Heart right ventricle (tissue), 16 donors: ENCODE measurements at regions of chr17 and their contacts with region 1.

Region 1: DNA sequence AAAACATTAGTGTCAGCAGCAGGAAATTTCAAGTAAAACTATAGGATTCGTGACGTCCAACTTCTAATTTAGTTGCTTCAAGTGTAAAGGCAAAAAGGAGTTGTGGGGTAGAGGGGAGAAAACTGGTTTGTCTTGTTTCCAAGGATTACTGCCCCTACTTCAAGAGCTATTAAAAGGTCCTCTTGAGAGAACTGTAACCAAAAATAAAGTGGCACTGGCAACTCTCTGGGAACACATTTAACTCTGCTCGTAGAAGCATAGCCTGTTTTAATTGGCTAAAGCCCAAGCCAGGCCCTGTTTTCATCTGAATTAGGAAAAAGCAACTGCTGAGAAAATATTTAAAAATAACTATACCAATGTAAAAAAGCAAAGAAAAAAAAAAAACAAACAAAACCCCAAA is 51.8 kb upstream of the AKAP1 start:
- DNase-seq: peak in 1 of 2 donors; percentile 61
- ATAC-seq: peak; percentile 72 to 92 (median 84)
- H3K4me3 ChIP-seq: no peak overlapping the region
- H3K27ac ChIP-seq: peak overlapping the region; percentile 64 to 89 (median 78)
- H3K4me1 ChIP-seq: peaks cover 0 to 44% (median 12%) of the 10 kb centered on the region in 9 donors
- H3K27me3 ChIP-seq: peaks cover 0 to 13% (median 0%) of the 10 kb centered on the region in 7 donors
- CTCF ChIP-seq: no peak

Region 2: DNA sequence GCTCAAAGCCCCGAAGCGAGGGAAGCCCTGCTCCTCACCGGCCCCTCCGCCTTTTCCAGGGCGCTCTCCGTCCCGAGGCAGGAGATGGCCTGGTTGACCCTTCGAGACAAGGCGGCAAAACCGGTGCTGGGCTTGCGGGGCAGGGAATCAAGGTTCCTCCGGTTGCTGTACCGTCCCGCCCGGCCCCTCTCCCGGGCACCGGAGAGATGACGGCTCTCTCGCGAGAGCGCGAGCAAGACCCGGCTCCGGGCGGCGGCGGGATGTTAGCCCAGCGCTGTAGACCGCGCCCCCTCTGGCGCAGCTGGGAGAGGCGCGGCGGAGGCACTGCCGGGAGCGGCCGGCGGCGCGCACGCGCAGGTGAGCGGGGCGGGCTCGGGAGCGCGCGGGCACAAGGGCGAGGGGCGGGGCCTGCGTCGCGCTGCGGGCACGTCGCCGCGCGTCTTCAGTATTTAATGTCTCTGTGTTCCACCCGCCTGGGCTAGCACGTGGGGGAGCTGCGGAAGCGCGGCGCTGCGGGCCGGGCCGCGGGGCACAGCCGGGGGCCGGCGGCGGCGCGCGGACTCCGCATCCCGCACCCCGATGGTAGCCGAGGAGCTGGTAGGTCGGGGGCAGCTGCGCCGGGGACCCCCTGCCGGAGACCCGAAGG is 51.6 kb after region 1 on chr17 and contains the start of gene AKAP1:
- intact Hi-C with region 1: loop called in 3 of 10 experiments (anchors 2 to 10 kb)
- DNase-seq: peak; percentile 94 to 97
- ATAC-seq: peak; percentile 91 to 96 (median 95)
- H3K4me3 ChIP-seq: peak within 1 kb of the TSS; percentile 42 to 95 (median 78)
- H3K27ac ChIP-seq: peak within 1 kb of the TSS; percentile 88 to 99 (median 95)
- H3K4me1 ChIP-seq: peaks cover 6 to 57% (median 38%) of the 10 kb centered on the region in 9 donors
- H3K27me3 ChIP-seq: no peaks in the 10 kb centered on the region
- CTCF ChIP-seq: peak in 8 of 9 donors; percentile 7 to 49 (median 32)
- total RNA-seq, gene AKAP1: 107 to 234 (median 160) TPM

Region 3: DNA sequence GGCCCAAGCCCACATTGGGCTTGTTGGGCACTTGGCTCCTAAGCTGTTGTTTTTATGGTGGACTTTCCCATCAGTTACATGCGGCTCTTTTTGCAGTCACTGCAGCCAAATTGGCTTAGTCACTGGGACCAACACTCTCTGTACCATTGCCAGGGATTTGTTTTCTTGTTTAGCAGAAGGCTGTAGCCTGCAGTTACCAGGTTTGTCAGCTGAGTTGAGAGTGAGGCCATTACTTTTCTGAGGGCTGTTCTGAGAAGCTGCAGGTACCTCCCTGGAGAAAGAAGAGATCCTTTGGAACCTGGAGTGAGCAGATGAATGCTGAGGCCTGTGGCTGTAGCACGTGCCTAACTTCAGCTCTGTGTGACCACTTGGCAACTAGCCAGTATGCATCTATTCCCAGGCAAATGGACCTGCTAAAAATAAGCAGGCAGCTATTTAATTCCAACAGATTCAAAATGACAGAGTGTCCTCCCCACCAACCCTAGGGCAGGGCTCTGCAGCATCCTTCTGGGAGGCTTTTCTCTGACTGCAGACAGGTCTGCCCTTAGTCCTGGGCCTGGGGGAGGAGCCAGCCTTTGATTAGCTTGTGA is 64.6 kb after region 1 on chr17:
- intact Hi-C with region 1: loop called in 1 of 10 experiments (anchors 10 kb)
- DNase-seq: peak in 1 of 2 donors; percentile 74
- ATAC-seq: peak; percentile 55 to 78 (median 72)
- H3K4me3 ChIP-seq: no peak overlapping the region
- H3K27ac ChIP-seq: peak overlapping the region; percentile 62 to 99 (median 80)
- H3K4me1 ChIP-seq: peaks cover 30 to 96% (median 66%) of the 10 kb centered on the region in 9 donors
- H3K27me3 ChIP-seq: no peaks in the 10 kb centered on the region
- CTCF ChIP-seq: no peak

Region 4: GRCh38 chr17:57106107-57106835 is 73.0 kb after region 1 on chr17:
- intact Hi-C with region 1: loop called in 1 of 10 experiments (anchors 5 kb)
- DNase-seq: peak in 1 of 2 donors; percentile 34
- ATAC-seq: peak in 6 of 8 donors; percentile 6 to 44 (median 20)
- H3K4me3 ChIP-seq: no peak overlapping the region
- H3K27ac ChIP-seq: peak overlapping the region in 9 of 10 donors; percentile 14 to 92 (median 80)
- H3K4me1 ChIP-seq: peaks cover 24 to 92% (median 62%) of the 10 kb centered on the region in 9 donors
- H3K27me3 ChIP-seq: no peaks in the 10 kb centered on the region
- CTCF ChIP-seq: peak in 8 of 9 donors; percentile 10 to 57 (median 46)